ENCODE measurements at regions of chr1 and their contacts with region 1.

Region 1: DNA sequence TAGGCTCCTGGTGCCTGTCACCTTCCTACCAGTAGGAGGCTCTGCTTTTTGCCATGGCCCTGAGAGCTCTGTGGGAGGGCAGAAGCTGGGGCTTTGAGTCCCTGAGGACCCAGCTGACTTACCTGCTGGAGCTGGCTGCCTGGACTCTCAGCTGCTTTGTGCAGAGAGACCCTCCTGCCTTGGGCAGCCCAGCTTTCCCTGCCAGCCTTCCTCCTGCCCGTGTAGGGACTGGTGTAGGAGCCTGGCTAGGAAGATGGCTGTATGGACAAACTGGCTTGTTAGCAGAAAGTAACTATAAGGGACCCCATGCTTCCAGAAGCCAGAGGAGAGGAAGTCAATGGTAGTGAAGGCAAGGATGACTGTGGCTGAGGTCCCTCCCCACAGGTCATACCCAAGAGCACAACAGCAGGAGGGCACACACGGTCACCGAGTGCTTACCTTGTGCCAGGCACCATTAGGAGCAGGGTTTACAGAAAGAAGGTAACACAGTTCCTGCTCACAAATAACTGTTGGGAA is 9.7 kb upstream of the CELSR2 start:
- DNase-seq: peak; percentile 76
- ATAC-seq: no peak; the same call in 1 of the 2 replicates
- H3K4me3 Mint-ChIP-seq: peak overlapping the region; percentile 22; the same call in 1 of the 2 replicates
- H3K27ac Mint-ChIP-seq: peak overlapping the region; percentile 92
- H3K4me1 Mint-ChIP-seq: peaks cover 54% of the 10 kb centered on the region
- H3K27me3 Mint-ChIP-seq: no peaks in the 10 kb centered on the region; the same call in 1 of the 2 replicates
- CTCF ChIP-seq: peak; percentile 48

Region 2: GRCh38 chr1:108963052-108963686 is 276.5 kb before region 1 on chr1 and contains the start of gene CLCC1:
- CTCF ChIA-PET with region 1: no interaction called
- POLR2A ChIA-PET with region 1: no interaction called
- DNase-seq: peak; percentile 90
- ATAC-seq: peak; percentile 95
- H3K4me3 Mint-ChIP-seq: peak within 1 kb of the TSS; percentile 80
- H3K27ac Mint-ChIP-seq: peak within 1 kb of the TSS; percentile 45
- H3K4me1 Mint-ChIP-seq: peaks cover 17% of the 10 kb centered on the region
- H3K27me3 Mint-ChIP-seq: no peaks in the 10 kb centered on the region
- CTCF ChIP-seq: no peak
- total RNA-seq, gene CLCC1: 25.1 to 27.4 TPM (median 25.7 TPM) in 3 replicates

Region 3: DNA sequence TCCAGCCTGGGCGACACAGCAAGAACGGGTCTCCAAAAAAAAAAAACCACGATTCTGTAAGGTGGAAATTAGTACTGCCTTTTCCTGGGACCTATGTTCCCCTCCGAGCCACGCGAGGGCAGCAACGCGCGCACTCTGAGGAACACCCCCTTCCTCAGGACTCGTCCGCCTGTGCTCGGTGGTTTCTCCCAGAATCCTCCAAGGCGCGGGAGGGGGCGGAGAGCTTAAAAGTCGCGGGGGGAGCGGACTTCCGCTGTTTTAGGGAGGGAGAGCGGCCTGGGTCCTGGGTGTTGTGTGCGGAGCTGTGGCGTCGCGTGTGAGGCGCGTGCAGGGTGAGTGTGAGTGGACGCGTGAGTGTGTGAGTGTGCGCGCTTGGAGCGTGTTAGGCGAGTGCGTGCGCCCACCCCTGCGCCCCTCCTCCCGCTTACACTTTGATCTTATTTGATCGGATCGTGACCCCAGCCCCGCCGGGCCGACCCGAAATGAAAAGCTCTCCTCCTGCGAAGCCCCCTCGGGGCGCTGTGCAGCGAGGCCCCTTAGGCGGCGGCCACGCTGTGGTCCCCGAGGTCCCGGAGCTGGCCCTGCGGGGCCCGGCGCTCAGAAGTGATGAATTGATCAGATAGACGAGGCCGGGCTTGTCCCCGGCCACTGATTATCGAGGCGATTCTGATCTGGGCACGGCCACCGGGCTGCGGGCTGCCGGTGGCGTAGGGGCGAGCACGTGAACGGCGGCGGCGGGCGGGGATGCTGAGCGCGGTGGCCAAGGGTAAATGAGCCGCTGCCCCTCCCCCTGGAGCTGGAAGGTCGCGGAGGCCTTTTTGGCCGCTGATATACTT is 139.5 kb before region 1 on chr1:
- CTCF ChIA-PET with region 1: interaction called, 10 read pairs
- POLR2A ChIA-PET with region 1: no interaction called
- DNase-seq: peak; percentile 96
- ATAC-seq: peak; percentile 95
- H3K4me3 Mint-ChIP-seq: peak overlapping the region; percentile 98
- H3K27ac Mint-ChIP-seq: peak overlapping the region; percentile 98
- H3K4me1 Mint-ChIP-seq: 0 out of 2 replicates have a peak, but pooled peaks cover 3% of the 10 kb centered on the region
- H3K27me3 Mint-ChIP-seq: peaks cover under 1% of the 10 kb centered on the region
- CTCF ChIP-seq: no peak

Region 4: GRCh38 chr1:109201123-109201703 is 38.4 kb before region 1 on chr1:
- CTCF ChIA-PET with region 1: interaction called, 51 read pairs
- POLR2A ChIA-PET with region 1: interaction called, 3 read pairs
- DNase-seq: peak; percentile 77
- ATAC-seq: peak; percentile 92
- H3K4me3 Mint-ChIP-seq: no peak overlapping the region
- H3K27ac Mint-ChIP-seq: 0 out of 2 replicates have a peak overlapping the region, but pooled peaks have one; percentile 59
- H3K4me1 Mint-ChIP-seq: peaks cover 3% of the 10 kb centered on the region; the same call in 1 of the 2 replicates
- H3K27me3 Mint-ChIP-seq: no peaks in the 10 kb centered on the region; the same call in 1 of the 2 replicates
- CTCF ChIP-seq: peak; percentile 42

Region 5: GRCh38 chr1:109229531-109230127 is 10.0 kb before region 1 on chr1:
- CTCF ChIA-PET with region 1: interaction called, 36 read pairs
- POLR2A ChIA-PET with region 1: interaction called, 11 read pairs
- DNase-seq: peak; percentile 89
- ATAC-seq: peak; percentile 96
- H3K4me3 Mint-ChIP-seq: peak overlapping the region; percentile 56
- H3K27ac Mint-ChIP-seq: peak overlapping the region; percentile 98
- H3K4me1 Mint-ChIP-seq: peaks cover 64% of the 10 kb centered on the region
- H3K27me3 Mint-ChIP-seq: no peaks in the 10 kb centered on the region
- CTCF ChIP-seq: no peak

Region 6: GRCh38 chr1:109277434-109278204 is 38.0 kb after region 1 on chr1:
- CTCF ChIA-PET with region 1: interaction called, 12 read pairs
- POLR2A ChIA-PET with region 1: interaction called, 3 read pairs
- DNase-seq: peak; percentile 91
- ATAC-seq: peak; percentile 86
- H3K4me3 Mint-ChIP-seq: no peak overlapping the region
- H3K27ac Mint-ChIP-seq: peak overlapping the region; percentile 85
- H3K4me1 Mint-ChIP-seq: peaks cover 37% of the 10 kb centered on the region
- H3K27me3 Mint-ChIP-seq: no peaks in the 10 kb centered on the region; the same call in 1 of the 2 replicates
- CTCF ChIP-seq: peak; percentile 95

Region 7: GRCh38 chr1:109350655-109351054 is 111.0 kb after region 1 on chr1:
- CTCF ChIA-PET with region 1: no interaction called
- POLR2A ChIA-PET with region 1: no interaction called
- DNase-seq: no peak
- ATAC-seq: no peak
- H3K4me3 Mint-ChIP-seq: no peak overlapping the region
- H3K27ac Mint-ChIP-seq: no peak overlapping the region
- H3K4me1 Mint-ChIP-seq: no peaks in the 10 kb centered on the region
- H3K27me3 Mint-ChIP-seq: no peaks in the 10 kb centered on the region
- CTCF ChIP-seq: no peak

Region 8: GRCh38 chr1:109474697-109475096 is 235.1 kb after region 1 on chr1:
- CTCF ChIA-PET with region 1: no interaction called
- POLR2A ChIA-PET with region 1: no interaction called
- DNase-seq: no peak
- ATAC-seq: no peak
- H3K4me3 Mint-ChIP-seq: no peak overlapping the region
- H3K27ac Mint-ChIP-seq: no peak overlapping the region
- H3K4me1 Mint-ChIP-seq: no peaks in the 10 kb centered on the region; the same call in 1 of the 2 replicates
- H3K27me3 Mint-ChIP-seq: peaks cover 21% of the 10 kb centered on the region
- CTCF ChIP-seq: no peak